ENCODE measurements at regions of chr9 and their contacts with region 1.

Region 1: GRCh38 chr9:3732077-3733038 is 206.6 kb upstream of the RFX3 start:
- DNase-seq: peak; percentile 30 to 53 (median 34)
- H3K4me3 ChIP-seq: no peak overlapping the region
- H3K27ac ChIP-seq: peak overlapping the region in 1 of 2 donors; percentile 45
- H3K4me1 ChIP-seq: peaks cover 3% of the 10 kb centered on the region
- H3K27me3 ChIP-seq: no peaks in the 10 kb centered on the region
- CTCF ChIP-seq: peak; percentile 50 to 68 (median 56)
- EP300 ChIP-seq: no peak
- POLR2A ChIP-seq: no peak

Region 2: GRCh38 chr9:3962971-3963642 is 230.7 kb after region 1 on chr9:
- intact Hi-C with region 1: no loop called
- DNase-seq: peak; percentile 44 to 75 (median 68)
- H3K4me3 ChIP-seq: no peak overlapping the region
- H3K27ac ChIP-seq: no peak overlapping the region
- H3K4me1 ChIP-seq: peaks cover 8% of the 10 kb centered on the region
- H3K27me3 ChIP-seq: no peaks in the 10 kb centered on the region
- CTCF ChIP-seq: no peak
- EP300 ChIP-seq: no peak
- POLR2A ChIP-seq: no peak

Region 3: GRCh38 chr9:4207881-4208615 is 475.7 kb after region 1 on chr9:
- intact Hi-C with region 1: no loop called
- DNase-seq: no peak
- H3K4me3 ChIP-seq: no peak overlapping the region
- H3K27ac ChIP-seq: peak overlapping the region in 1 of 2 donors; percentile 81
- H3K4me1 ChIP-seq: peaks cover 14% of the 10 kb centered on the region
- H3K27me3 ChIP-seq: no peaks in the 10 kb centered on the region
- CTCF ChIP-seq: no peak
- EP300 ChIP-seq: no peak
- POLR2A ChIP-seq: no peak

Region 4: DNA sequence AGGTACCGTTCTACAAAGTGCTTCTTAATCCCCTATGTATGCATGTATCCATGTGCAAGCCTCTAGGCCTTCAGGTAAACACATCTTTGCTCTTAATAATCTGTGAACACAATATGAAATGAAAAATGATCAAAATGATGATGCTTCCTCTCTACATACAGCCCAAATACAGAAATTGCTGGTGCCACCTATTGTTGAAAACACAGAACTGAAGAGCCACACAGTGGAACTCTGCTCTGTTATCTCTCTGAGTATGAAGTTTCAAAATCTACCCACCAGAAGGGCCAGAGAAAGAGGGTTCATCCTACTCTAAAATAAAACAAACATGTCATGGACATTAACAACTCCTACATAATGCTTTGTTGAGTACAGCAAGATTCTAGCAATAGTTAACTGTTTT is 496.2 kb after region 1 on chr9:
- intact Hi-C with region 1: loop called in 1 of 4 experiments (anchors 10 kb)
- DNase-seq: no peak
- H3K4me3 ChIP-seq: no peak overlapping the region
- H3K27ac ChIP-seq: no peak overlapping the region
- H3K4me1 ChIP-seq: peaks cover 1% of the 10 kb centered on the region
- H3K27me3 ChIP-seq: no peaks in the 10 kb centered on the region
- CTCF ChIP-seq: peak in 2 of 3 donors; percentile 27 to 47
- EP300 ChIP-seq: no peak
- POLR2A ChIP-seq: no peak

Region 5: GRCh38 chr9:4315582-4316215 is 583.3 kb after region 1 on chr9:
- intact Hi-C with region 1: loop called in 1 of 4 experiments (anchors 10 kb)
- DNase-seq: peak; percentile 51 to 85 (median 76)
- H3K4me3 ChIP-seq: no peak overlapping the region
- H3K27ac ChIP-seq: no peak overlapping the region
- H3K4me1 ChIP-seq: peaks cover 5% of the 10 kb centered on the region
- H3K27me3 ChIP-seq: no peaks in the 10 kb centered on the region
- CTCF ChIP-seq: peak; percentile 36 to 55 (median 43)
- EP300 ChIP-seq: no peak
- POLR2A ChIP-seq: no peak

Region 6: DNA sequence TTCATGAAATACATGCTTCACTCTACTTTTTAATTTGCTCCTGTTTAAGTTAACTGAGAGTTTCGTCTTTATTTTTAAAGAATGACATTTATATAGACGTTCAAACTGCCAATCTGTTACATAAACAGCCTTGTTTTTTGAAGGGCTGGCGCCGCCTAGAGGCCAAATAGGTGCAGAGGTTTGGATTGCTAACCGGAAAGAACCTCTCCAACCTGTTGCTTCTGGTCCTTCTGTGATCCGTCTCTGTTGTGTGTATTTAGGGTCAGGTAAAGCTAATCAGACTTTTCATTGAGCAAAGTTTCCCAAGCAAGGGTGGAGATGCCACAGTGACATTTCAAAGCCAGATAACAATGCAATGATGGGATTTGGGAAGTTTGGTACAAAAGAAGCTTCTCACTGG is 607.0 kb after region 1 on chr9:
- intact Hi-C with region 1: loop called in 1 of 4 experiments (anchors 10 kb)
- DNase-seq: peak; percentile 64 to 89 (median 83)
- H3K4me3 ChIP-seq: no peak overlapping the region
- H3K27ac ChIP-seq: no peak overlapping the region
- H3K4me1 ChIP-seq: no peaks in the 10 kb centered on the region
- H3K27me3 ChIP-seq: no peaks in the 10 kb centered on the region
- CTCF ChIP-seq: peak; percentile 54 to 90 (median 81)
- EP300 ChIP-seq: no peak
- POLR2A ChIP-seq: no peak

Measured in ovary (tissue), 10 donors.